Naive thymus-derived CD8-positive, alpha-beta T cell (primary cell): ENCODE measurements at regions of chr17 and their contacts with region 1.

Region 1: DNA sequence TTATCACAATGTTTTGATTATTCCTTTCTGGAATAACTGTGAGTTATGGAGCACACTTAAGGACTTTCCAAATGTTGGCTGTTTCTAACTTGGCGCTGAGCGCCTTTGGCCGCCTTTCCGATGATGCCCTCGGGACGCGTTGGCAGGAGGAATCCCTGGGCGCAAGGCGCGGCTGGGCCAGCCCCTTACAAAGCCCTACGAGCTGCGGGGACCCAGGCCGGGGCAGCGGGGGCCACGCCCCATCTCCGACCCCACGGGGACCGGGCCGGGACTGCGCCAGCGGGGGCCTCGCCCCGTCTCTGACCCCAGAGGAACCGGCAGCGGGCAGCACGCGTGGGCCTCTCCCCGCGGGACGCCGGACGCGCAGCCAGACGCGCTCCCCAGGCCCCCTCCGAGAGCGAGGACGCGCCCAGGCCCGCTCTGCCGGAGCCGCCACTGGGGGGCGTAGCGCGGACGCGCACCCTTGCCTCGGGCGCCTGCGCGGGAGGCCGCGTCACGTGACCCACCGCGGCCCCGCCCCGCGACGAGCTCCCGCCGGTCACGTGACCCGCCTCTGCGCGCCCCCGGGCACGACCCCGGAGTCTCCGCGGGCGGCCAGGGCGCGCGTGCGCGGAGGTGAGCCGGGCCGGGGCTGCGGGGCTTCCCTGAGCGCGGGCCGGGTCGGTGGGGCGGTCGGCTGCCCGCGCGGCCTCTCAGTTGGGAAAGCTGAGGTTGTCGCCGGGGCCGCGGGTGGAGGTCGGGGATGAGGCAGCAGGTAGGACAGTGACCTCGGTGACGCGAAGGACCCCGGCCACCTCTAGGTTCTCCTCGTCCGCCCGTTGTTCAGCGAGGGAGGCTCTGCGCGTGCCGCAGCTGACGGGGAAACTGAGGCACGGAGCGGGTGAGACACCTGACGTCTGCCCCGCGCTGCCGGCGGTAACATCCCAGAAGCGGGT is at the start of gene GAA:
- DNase-seq: peak; percentile 80 to 97 (median 92)
- ATAC-seq: peak; percentile 84 to 85
- H3K4me3 Mint-ChIP-seq: peak within 1 kb of the TSS; percentile 86 to 93 (median 90)
- H3K27ac Mint-ChIP-seq: peak within 1 kb of the TSS; percentile 85 to 94 (median 92)
- H3K4me1 Mint-ChIP-seq: peaks cover 17 to 33% (median 32%) of the 10 kb centered on the region in 4 donors
- H3K27me3 Mint-ChIP-seq: no peaks in the 10 kb centered on the region
- polyA plus RNA-seq, gene GAA: 7.9 to 13.0 (median 10.8) TPM

Region 2: DNA sequence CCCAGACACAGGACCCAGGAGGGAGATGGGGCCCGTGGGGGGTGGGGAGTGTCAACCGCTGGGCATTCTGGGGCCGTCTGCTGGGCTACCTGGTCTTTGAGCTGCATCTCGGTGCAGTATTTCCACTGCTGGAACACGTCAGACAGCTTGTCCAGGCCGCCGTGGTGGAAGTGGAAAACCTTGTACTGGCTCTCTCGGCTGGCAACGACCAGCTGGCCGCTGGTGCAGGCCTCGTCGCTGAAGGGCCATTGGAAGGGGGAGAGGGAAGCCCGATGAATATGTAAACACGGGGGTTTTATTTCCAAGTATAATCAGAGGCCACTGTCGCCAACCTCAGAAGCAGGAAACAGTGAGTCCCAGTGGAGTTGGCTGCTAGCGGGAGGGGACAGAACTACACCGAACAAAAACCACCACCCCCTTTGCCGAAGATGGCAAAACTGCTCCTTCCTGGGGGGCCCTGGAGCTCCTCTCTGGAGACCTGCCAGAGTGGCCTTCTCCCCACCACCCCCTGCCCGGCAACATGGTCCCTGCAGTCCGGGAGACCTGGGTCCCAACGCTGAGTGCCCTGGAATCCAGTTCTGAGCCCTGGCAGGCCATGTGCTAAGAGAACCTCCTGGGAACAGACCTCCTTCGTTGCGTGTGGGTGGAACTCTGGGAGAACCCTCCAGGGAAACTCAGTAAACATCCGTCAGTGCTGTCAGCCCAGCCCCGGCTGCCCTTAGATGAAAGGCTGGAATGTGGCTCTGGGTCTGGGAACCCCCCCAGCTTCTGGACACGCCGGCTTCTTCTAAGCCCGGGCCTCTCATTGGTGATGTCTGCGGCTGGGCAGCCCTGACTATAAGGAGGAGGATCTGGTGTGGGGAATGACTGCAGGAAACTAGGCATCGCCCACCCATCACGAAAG is 149.7 kb before region 1 on chr17:
- POLR2A ChIA-PET with region 1: no interaction called
- DNase-seq: no peak
- ATAC-seq: no peak
- H3K4me3 Mint-ChIP-seq: no peak overlapping the region
- H3K27ac Mint-ChIP-seq: no peak overlapping the region
- H3K4me1 Mint-ChIP-seq: peaks cover 0 to 8% (median 2%) of the 10 kb centered on the region in 4 donors
- H3K27me3 Mint-ChIP-seq: no peaks in the 10 kb centered on the region

Region 3: GRCh38 chr17:80147035-80147836 is 46.0 kb after region 1 on chr17 and contains the start of gene EIF4A3:
- POLR2A ChIA-PET with region 1: interaction called, 17 read pairs
- DNase-seq: peak; percentile 89 to 99 (median 97)
- ATAC-seq: peak; percentile 87 to 93
- H3K4me3 Mint-ChIP-seq: peak within 1 kb of the TSS; percentile 80 to 100 (median 98)
- H3K27ac Mint-ChIP-seq: peak within 1 kb of the TSS; percentile 96 to 99 (median 98)
- H3K4me1 Mint-ChIP-seq: peaks cover 14 to 54% (median 38%) of the 10 kb centered on the region in 4 donors
- H3K27me3 Mint-ChIP-seq: no peaks in the 10 kb centered on the region
- polyA plus RNA-seq, gene EIF4A3: 56.0 to 88.6 (median 58.2) TPM

Region 4: DNA sequence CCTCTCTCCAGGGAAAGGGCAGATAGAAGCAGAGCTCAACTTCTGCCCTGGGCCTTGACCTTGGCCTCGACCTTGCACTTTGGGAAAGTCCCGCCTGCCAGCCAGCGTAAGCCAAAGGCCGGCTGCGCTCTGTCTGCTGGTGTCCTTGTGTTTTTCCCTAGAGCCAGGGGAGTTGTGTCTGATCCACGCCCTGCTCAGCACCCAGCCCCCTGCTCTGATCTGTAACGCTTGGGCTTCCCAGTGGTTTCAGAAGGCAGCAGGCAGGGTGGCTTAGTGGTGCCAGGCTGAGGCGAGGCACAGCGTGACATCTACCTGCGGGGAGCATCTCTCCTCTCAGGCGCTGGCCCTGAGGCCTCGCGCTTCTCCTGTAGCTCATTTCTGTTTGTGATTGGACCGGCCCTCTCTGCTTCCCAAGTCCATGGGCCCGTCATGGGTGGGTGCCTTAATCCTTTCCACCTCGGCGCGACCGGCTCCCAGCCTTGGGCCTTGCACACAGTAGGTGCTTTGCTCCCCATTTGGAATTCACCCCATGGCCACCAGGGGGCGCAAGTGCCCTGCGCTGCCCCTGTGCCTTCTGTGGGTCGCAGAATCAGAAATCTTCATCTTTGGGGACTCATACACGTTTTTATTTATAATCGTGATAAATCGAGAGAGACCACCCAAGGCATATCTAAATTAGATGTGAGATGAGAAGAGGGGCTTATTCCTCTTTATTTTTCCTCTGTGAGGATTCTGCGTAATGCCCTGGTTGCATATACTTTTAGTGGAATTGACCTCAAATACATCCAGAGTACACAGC is 94.7 kb after region 1 on chr17:
- POLR2A ChIA-PET with region 1: no interaction called
- DNase-seq: peak; percentile 37 to 80 (median 57)
- ATAC-seq: peak; percentile 62 to 70
- H3K4me3 Mint-ChIP-seq: peak overlapping the region in 1 of 10 donors; percentile 48
- H3K27ac Mint-ChIP-seq: peak overlapping the region in 7 of 10 donors; percentile 4 to 93 (median 51)
- H3K4me1 Mint-ChIP-seq: peaks cover 5 to 7% (median 6%) of the 10 kb centered on the region in 4 donors
- H3K27me3 Mint-ChIP-seq: peaks cover 0 to 10% (median 2%) of the 10 kb centered on the region in 5 donors